Heart left ventricle (tissue), 16 donors: ENCODE measurements at regions of chr10 and their contacts with region 1.

Region 1: DNA sequence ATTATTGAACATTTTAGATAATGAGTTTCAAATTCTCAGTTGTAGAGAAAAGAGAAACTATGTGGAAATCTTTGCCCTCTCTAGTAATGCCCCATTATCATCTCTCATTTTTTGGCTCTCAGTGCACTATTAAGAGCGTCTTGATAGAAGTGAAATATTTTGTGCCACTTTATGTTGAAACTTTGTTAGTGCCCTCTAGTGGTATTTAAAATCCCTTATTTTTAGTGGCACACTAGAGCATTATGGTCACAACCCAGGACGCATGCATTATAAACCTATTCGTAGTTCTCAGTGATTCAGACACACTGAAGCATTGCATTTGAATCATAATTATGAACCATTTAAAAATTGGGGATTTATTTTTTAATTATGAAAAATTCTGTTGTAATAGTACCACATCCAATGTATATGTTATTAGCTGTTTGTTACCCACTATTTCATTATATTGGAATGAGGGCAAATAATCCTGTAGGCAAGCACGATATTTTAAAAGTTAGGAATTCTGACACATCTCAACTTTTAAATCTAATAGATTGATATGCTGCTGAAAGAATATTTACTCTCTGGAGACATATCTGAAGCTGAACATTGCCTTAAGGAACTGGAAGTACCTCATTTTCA is 21.9 kb downstream of the PDCD4 start:
- DNase-seq: no peak
- ATAC-seq: peak; percentile 47 to 84 (median 77)
- H3K4me3 ChIP-seq: no peak overlapping the region
- H3K27ac ChIP-seq: peak overlapping the region in 1 of 12 donors; percentile 20
- H3K4me1 ChIP-seq: peaks cover 0 to 13% (median 4%) of the 10 kb centered on the region in 12 donors
- H3K27me3 ChIP-seq: no peaks in the 10 kb centered on the region
- CTCF ChIP-seq: peak; percentile 47 to 73 (median 66)
- POLR2A ChIP-seq: no peak

Region 2: GRCh38 chr10:110600487-110601101 is 293.1 kb before region 1 on chr10:
- intact Hi-C with region 1: loop called in 2 of 10 experiments (anchors 5 to 10 kb)
- DNase-seq: no peak
- ATAC-seq: peak in 1 of 4 donors; percentile 28
- H3K4me3 ChIP-seq: no peak overlapping the region
- H3K27ac ChIP-seq: no peak overlapping the region
- H3K4me1 ChIP-seq: no peaks in the 10 kb centered on the region
- H3K27me3 ChIP-seq: no peaks in the 10 kb centered on the region
- CTCF ChIP-seq: peak; percentile 11 to 55 (median 39)
- POLR2A ChIP-seq: no peak

Region 3: GRCh38 chr10:110671788-110672579 is 221.7 kb before region 1 on chr10:
- intact Hi-C with region 1: loop called in 1 of 10 experiments (anchors 10 kb)
- DNase-seq: peak; percentile 76 to 86 (median 82)
- ATAC-seq: peak; percentile 53 to 88 (median 82)
- H3K4me3 ChIP-seq: peak overlapping the region; percentile 32 to 80 (median 60)
- H3K27ac ChIP-seq: peak overlapping the region; percentile 69 to 97 (median 88)
- H3K4me1 ChIP-seq: peaks cover 0 to 80% (median 26%) of the 10 kb centered on the region in 12 donors
- H3K27me3 ChIP-seq: peaks cover 0 to 1% (median 0%) of the 10 kb centered on the region in 9 donors
- CTCF ChIP-seq: peak; percentile 66 to 97 (median 88)
- POLR2A ChIP-seq: peak in 1 of 2 donors; percentile 20

Region 4: DNA sequence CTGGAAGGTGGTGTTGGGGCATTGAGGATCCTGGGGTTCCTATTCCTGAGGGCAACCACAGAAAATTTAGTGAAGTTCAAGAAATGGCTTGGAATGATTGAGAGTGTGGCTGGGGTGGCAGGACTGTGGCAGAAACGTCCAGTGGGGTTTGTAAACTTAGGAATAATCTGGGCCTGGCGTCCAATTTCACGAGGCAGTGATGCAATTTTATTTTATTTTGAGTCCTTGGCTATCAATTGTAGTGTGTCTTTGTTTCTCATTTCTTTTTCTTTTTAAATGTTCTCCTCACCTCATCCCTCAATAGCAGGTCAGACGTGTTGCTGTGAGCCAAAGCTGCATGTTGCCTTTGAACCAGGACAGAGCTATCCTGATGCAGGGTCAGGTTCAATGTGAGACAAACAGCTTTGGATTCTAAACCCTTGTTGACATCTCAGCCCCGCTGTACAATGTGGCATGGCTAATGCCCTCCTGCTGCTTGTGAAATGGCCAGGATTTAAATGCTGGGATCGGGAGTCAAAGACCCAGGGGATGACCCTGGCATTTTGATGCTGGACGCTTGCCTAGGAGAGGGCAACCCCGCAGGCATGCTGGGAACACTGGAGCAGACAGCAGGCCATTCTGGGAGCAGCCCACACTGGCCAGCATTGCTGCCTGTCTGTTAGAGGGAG is 184.8 kb before region 1 on chr10:
- intact Hi-C with region 1: no loop called
- DNase-seq: peak in 2 of 5 donors; percentile 63 to 73
- ATAC-seq: peak; percentile 69 to 88 (median 74)
- H3K4me3 ChIP-seq: no peak overlapping the region
- H3K27ac ChIP-seq: peak overlapping the region; percentile 4 to 83 (median 73)
- H3K4me1 ChIP-seq: peaks cover 0 to 71% (median 36%) of the 10 kb centered on the region in 12 donors
- H3K27me3 ChIP-seq: no peaks in the 10 kb centered on the region
- CTCF ChIP-seq: no peak
- POLR2A ChIP-seq: no peak

Region 5: GRCh38 chr10:110803830-110804338 is 89.8 kb before region 1 on chr10:
- intact Hi-C with region 1: loop called in 8 of 10 experiments (anchors 5 kb)
- DNase-seq: peak in 2 of 5 donors; percentile 53 to 55
- ATAC-seq: peak; percentile 44 to 66 (median 58)
- H3K4me3 ChIP-seq: no peak overlapping the region
- H3K27ac ChIP-seq: peak overlapping the region in 8 of 12 donors; percentile 14 to 68 (median 31)
- H3K4me1 ChIP-seq: peaks cover 0 to 42% (median 26%) of the 10 kb centered on the region in 12 donors
- H3K27me3 ChIP-seq: no peaks in the 10 kb centered on the region
- CTCF ChIP-seq: peak; percentile 36 to 74 (median 55)
- POLR2A ChIP-seq: no peak